ENCODE measurements at regions of chr20 and their contacts with region 1.

Region 1: GRCh38 chr20:64057628-64058498 is 5.1 kb upstream of the TCEA2 start:
- DNase-seq: peak; percentile 77 to 86
- ATAC-seq: peak; percentile 61 to 73 (median 67)
- H3K4me3 ChIP-seq: peak overlapping the region; percentile 44
- H3K27ac ChIP-seq: peak overlapping the region; percentile 68
- H3K4me1 ChIP-seq: no peaks in the 10 kb centered on the region
- H3K27me3 ChIP-seq: no peaks in the 10 kb centered on the region
- CTCF ChIP-seq: peak; percentile 73

Region 2: DNA sequence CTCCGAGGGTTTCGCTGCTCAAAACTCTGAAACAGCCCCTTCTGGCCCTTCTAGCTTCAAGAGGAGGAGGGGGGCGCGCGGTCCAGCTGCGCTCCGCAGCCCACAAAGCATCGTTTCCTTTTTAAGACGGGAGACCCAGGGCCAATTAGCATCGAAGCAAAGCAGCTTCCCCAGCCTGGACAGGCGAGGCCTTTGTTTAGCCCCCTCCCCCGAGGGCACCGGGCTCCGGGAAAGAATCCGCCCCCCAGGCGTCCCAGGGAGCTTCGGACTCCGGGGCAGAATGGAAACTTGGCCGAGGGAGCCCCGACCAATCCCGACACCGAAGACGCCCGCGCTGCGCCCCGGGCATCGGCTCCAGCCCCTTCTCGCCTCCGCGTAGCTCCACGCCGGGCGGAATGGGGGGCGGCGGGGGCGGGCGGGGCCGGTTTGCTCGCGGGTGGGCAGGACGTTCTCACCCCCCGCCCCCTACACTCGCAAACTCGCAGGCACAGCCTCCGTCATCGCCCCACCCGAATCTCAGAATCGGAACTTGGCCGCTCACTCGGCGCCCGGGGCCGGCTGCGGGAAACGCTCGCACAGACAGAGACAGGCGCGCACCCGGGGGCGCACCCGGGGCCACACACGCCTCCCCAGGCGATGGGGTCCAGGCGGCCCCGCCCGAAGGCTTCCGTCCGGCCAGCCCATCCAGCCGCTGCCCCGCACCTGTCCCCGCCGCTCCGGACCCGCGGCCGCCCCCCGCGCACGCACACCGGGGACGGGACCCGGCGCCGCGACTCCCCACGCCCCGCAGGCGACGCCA is 804.2 kb before region 1 on chr20:
- intact Hi-C with region 1: no loop called
- DNase-seq: no peak
- ATAC-seq: peak in 1 of 4 donors; percentile 21
- H3K4me3 ChIP-seq: peak overlapping the region; percentile 44
- H3K27ac ChIP-seq: no peak overlapping the region
- H3K4me1 ChIP-seq: peaks cover 2% of the 10 kb centered on the region
- H3K27me3 ChIP-seq: peaks cover 0 to 73% (median 34%) of the 10 kb centered on the region in 3 donors
- CTCF ChIP-seq: no peak

Region 3: DNA sequence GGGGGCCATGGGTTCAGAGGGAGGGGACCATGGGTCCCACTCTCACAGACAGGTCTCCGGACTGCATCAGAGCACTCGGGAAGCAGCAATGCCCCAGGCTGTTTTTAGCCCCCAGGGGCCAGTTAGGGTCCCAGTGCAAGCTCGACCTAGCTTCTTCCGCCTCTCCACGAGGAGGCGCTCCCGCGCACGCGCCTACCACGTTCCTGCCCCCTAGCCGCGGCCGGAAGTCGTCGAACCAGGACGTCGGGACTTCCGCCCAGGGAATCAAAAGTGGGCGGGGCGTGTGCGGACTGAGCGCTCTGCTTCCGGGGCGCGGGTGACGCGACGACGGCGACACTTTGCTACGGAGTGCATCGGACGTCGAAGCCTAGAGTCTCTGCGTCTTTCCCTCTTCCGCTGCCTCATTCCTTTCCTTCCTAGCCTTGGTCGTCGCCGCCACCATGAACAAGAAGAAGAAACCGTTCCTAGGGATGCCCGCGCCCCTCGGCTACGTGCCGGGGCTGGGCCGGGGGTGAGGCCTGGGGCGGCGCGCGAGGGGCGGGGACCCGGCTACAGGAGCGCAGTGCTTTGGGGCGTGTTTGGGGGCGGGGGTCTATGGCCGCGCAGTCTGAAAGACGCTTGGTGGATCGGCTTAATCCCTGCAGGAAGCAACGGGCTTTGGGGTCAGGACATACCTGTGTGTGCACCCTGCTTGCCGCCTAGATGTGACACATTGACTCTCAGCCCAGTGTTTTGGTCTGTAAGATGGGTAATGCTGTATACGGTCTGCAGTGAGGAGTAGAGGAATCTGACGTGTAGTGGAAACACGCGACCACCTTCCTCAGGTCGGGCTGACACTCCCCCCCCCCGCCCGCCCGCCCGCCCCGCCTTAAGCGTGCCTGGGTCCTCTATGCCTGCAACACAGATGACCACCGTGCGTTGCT is 76.8 kb before region 1 on chr20 and contains the start of gene PRPF6:
- intact Hi-C with region 1: loop called in 1 of 2 experiments (anchors 2 kb)
- DNase-seq: peak; percentile 96 to 98
- ATAC-seq: peak; percentile 91 to 96 (median 92)
- H3K4me3 ChIP-seq: peak within 1 kb of the TSS; percentile 99
- H3K27ac ChIP-seq: peak within 1 kb of the TSS; percentile 89
- H3K4me1 ChIP-seq: peaks cover 18% of the 10 kb centered on the region
- H3K27me3 ChIP-seq: peaks cover 0 to 3% (median 0%) of the 10 kb centered on the region in 3 donors
- CTCF ChIP-seq: peak; percentile 82
- total RNA-seq, gene PRPF6: 51.0 to 63.1 (median 59.8) TPM

Measured in psoas muscle (tissue), 8 donors.